Activated B cell treated with CpG ODN at 0.5 μM for 24 hours (primary cell): ENCODE measurements at regions of chr10 and their contacts with region 1.

Region 1: DNA sequence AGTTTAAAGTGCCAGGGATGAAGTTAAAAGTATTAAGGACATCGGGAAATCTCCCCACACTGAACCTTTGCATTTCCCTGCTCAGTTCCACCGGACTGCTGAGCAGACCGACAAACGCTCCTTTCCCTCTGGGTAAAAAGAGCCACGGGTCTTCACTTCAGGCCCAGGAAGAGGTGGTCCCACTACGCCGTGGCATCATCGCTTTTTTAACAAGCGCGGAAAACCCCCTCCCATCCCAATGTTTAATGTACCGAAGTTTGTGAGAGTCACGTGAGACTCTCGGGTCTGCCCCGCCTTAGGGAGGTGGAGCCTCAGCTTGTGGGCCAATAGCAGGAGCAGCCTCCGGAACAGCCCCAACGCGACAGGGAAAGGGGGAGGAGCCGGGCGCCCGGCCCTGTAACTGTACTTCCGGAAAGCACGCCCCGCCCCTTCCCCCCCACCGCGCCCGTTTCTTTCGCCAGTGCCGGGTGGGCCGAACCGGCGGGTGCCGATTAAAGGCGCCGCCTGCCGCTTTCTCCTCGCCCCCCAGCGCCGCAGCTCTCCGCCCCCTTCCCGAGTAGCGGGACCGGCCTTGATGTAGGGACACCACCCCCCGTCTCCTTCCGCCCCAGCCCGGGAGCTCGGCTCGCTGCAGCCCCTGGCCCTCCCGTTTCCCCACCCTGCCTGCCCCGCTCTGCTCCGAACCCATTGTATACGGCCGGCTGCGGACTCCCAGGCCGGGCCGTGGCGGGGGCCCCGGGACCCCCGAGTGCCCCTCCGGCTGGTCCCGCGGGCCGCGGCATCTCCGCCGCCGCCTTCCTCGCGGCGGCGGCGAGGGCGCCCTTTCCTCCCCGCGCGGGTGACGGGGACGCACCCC is 2.2 kb upstream of the TRIM8 start:
- DNase-seq: peak; percentile 88
- ATAC-seq: peak; percentile 65
- H3K4me3 Mint-ChIP-seq: peak overlapping the region; percentile 88
- H3K27ac Mint-ChIP-seq: peak overlapping the region; percentile 96
- H3K4me1 Mint-ChIP-seq: peaks cover 27% of the 10 kb centered on the region
- H3K27me3 Mint-ChIP-seq: no peaks in the 10 kb centered on the region
- CTCF ChIP-seq: no peak

Region 2: DNA sequence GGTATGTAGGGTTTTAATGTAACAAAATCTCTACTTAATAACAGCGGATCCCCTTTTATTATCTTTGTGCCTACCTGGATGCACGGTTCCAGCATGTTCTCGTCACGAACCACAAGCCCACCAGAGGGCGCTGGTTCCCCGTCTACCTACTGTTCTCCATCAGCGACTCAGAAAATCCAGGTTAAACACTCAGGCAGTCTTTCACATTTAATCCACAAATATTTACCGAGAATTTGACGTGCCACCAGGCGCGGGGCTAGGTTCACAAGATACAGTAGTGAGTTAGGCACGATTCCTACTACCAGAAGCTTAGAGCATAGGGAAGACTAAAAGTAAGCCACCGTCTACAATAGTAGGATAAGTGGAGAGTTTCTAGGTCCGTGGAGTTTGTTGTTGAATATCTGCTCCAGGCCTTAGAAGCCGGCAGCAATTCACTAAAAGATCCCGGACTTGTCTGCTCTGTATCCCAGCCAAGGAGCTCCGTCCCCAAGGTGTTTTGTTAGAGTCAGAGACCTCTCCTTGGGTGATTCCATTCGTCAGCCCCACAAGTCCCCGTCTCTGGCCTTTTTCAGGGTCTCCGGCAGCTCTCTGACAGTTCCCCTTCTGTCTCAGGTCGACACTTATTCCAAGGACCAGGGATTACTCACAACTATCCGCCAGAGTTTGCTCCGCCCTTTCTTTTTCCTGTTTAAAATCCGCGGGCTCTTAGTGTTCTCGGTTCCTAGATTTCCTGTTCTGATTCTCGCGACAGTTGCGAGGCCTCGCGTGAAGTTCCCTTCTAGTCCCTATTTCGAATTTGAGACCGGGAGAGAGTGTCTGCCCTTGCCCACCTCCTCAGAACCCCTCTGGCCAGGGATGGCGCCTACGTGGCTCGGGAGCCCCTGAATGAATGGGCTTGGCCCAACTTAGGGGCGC is 1581.8 kb before region 1 on chr10:
- CTCF ChIA-PET with region 1: no interaction called
- POLR2A ChIA-PET with region 1: no interaction called
- intact Hi-C with region 1: loop called (anchors 10 kb)
- DNase-seq: peak; percentile 79
- ATAC-seq: peak; percentile 65
- H3K4me3 Mint-ChIP-seq: peak overlapping the region; percentile 98
- H3K27ac Mint-ChIP-seq: peak overlapping the region; percentile 95
- H3K4me1 Mint-ChIP-seq: peaks cover 34% of the 10 kb centered on the region
- H3K27me3 Mint-ChIP-seq: peaks cover 6% of the 10 kb centered on the region
- CTCF ChIP-seq: peak; percentile 62

Region 3: DNA sequence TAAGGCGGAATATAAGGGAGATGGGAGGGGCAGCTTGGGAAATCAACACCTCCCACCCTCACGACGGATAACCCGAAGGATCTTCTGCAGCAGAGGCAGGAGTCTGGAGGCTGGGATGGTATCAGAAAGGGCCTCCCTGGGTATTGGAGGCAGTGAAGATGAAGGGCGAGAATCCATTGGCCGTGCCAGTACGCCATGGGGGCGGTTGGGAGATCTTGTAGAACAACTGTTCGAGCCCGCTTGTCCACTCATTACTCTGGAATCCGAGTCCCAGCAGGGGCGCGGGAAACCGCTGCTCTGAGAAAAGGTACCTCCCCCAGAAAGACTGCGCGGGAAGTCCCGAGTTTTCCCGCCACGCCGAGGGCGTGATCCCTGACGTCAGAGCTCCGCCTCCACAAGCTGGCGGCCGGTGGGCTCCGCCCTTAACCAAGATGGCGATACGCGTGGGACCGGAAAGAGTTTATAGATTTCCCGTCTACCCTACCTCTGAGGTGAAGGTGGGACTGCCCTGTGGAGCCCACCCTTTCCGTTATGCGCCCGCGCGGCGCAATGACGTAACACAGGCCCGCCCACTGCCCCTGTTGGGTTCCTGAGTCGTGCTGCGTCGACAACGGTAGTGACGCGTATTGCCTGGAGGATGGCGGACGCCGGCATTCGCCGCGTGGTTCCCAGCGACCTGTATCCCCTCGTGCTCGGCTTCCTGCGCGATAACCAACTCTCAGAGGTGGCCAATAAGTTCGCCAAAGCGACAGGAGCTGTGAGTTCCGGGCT is 490.1 kb before region 1 on chr10 and contains the start of gene NOLC1:
- CTCF ChIA-PET with region 1: no interaction called
- POLR2A ChIA-PET with region 1: no interaction called
- intact Hi-C with region 1: loop called (anchors 5 kb)
- DNase-seq: peak; percentile 99
- ATAC-seq: peak; percentile 96
- H3K4me3 Mint-ChIP-seq: peak within 1 kb of the TSS; percentile 97
- H3K27ac Mint-ChIP-seq: peak within 1 kb of the TSS; percentile 93
- H3K4me1 Mint-ChIP-seq: peaks cover 35% of the 10 kb centered on the region
- H3K27me3 Mint-ChIP-seq: no peaks in the 10 kb centered on the region
- CTCF ChIP-seq: no peak
- total RNA-seq, gene NOLC1: 95.1 and 106 TPM in 2 replicates

Region 4: GRCh38 chr10:102596506-102596971 is 45.6 kb before region 1 on chr10:
- CTCF ChIA-PET with region 1: interaction called, 3 read pairs
- POLR2A ChIA-PET with region 1: no interaction called
- intact Hi-C with region 1: loop called (anchors 1 kb)
- DNase-seq: no peak
- ATAC-seq: peak; percentile 61
- H3K4me3 Mint-ChIP-seq: no peak overlapping the region
- H3K27ac Mint-ChIP-seq: no peak overlapping the region
- H3K4me1 Mint-ChIP-seq: no peaks in the 10 kb centered on the region
- H3K27me3 Mint-ChIP-seq: no peaks in the 10 kb centered on the region
- CTCF ChIP-seq: no peak

Region 5: GRCh38 chr10:102621438-102622325 is 20.4 kb before region 1 on chr10:
- CTCF ChIA-PET with region 1: no interaction called
- POLR2A ChIA-PET with region 1: no interaction called
- intact Hi-C with region 1: no loop called
- DNase-seq: no peak
- ATAC-seq: no peak
- H3K4me3 Mint-ChIP-seq: no peak overlapping the region
- H3K27ac Mint-ChIP-seq: no peak overlapping the region
- H3K4me1 Mint-ChIP-seq: peaks cover 11% of the 10 kb centered on the region
- H3K27me3 Mint-ChIP-seq: no peaks in the 10 kb centered on the region
- CTCF ChIP-seq: no peak

Region 6: GRCh38 chr10:102660888-102661657 is 19.0 kb after region 1 on chr10:
- CTCF ChIA-PET with region 1: interaction called, 3 read pairs
- POLR2A ChIA-PET with region 1: interaction called, 11 read pairs
- intact Hi-C with region 1: loop called (anchors 2 kb)
- DNase-seq: no peak
- ATAC-seq: peak; percentile 78
- H3K4me3 Mint-ChIP-seq: no peak overlapping the region
- H3K27ac Mint-ChIP-seq: no peak overlapping the region
- H3K4me1 Mint-ChIP-seq: peaks cover 16% of the 10 kb centered on the region
- H3K27me3 Mint-ChIP-seq: no peaks in the 10 kb centered on the region
- CTCF ChIP-seq: no peak

Region 7: DNA sequence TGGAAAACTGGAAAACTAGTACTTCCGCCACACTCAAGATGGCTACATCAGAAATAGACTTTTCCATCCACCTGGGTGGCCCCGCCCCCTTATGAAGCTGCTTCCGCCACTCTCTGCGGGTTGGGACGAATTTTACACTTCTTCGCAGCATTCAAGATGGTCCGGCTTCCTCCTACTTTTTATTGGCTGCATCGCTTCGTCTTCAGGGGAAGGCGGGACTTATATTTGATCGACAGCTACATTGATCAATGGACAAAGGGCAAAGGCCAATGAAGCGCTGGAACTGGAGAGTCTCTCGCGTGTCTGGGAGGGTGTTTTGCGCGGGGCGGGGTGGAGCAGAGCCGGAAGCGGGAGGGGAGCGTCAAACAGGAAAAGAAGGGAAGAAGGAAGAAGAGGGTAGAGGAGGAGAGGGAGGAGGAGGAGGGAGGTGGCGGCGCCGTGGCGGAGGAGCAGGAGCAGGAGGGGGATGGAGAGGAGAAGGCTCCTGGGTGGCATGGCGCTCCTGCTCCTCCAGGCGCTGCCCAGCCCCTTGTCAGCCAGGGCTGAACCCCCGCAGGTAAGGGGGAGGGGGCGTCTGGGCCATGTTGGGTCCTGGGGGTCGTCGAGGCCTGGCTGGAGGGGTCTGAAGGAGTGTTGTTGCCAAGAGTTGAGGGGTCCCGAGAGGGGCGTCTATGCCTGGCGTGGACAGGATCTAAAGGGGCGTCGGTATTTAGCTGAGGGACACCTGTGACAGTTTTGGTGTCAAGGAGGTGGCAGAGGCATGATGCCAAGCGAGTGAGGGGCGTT is 101.7 kb after region 1 on chr10 and contains the start of gene WBP1L:
- CTCF ChIA-PET with region 1: no interaction called
- POLR2A ChIA-PET with region 1: interaction called, 13 read pairs
- intact Hi-C with region 1: no loop called
- DNase-seq: peak; percentile 81
- ATAC-seq: peak; percentile 98
- H3K4me3 Mint-ChIP-seq: peak within 1 kb of the TSS; percentile 93
- H3K27ac Mint-ChIP-seq: peak within 1 kb of the TSS; percentile 87
- H3K4me1 Mint-ChIP-seq: peaks cover 47% of the 10 kb centered on the region
- H3K27me3 Mint-ChIP-seq: no peaks in the 10 kb centered on the region
- CTCF ChIP-seq: no peak
- total RNA-seq, gene WBP1L: 30.5 and 30.8 TPM in 2 replicates

Region 8: DNA sequence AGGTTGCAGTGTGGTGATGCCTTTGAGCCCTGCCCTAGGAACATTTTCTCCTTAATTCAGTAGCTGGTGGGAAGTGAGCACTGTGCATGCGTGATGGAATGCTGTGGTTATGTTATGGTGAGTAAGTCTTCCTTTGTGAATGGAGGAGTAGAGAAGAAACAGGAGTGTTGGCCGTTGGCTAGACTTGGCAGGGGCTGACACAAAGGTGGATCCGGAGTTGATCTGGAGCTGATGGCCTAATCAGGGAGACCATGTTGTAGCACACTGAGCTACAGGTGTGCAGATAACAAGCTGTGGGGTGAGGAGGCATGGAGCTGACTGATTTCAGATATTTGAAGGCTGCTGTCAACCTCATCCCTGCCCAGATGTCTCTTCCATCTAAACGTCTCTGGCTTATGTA is 398.3 kb after region 1 on chr10:
- CTCF ChIA-PET with region 1: no interaction called
- POLR2A ChIA-PET with region 1: no interaction called
- intact Hi-C with region 1: no loop called
- DNase-seq: no peak
- ATAC-seq: no peak
- H3K4me3 Mint-ChIP-seq: no peak overlapping the region
- H3K27ac Mint-ChIP-seq: no peak overlapping the region
- H3K4me1 Mint-ChIP-seq: peaks cover 15% of the 10 kb centered on the region
- H3K27me3 Mint-ChIP-seq: no peaks in the 10 kb centered on the region
- CTCF ChIP-seq: no peak

Region 9: GRCh38 chr10:103470761-103471653 is 828.9 kb after region 1 on chr10:
- CTCF ChIA-PET with region 1: no interaction called
- POLR2A ChIA-PET with region 1: no interaction called
- intact Hi-C with region 1: loop called (anchors 10 kb)
- DNase-seq: peak; percentile 70
- ATAC-seq: peak; percentile 76
- H3K4me3 Mint-ChIP-seq: peak overlapping the region; percentile 75
- H3K27ac Mint-ChIP-seq: peak overlapping the region; percentile 96
- H3K4me1 Mint-ChIP-seq: peaks cover 72% of the 10 kb centered on the region
- H3K27me3 Mint-ChIP-seq: no peaks in the 10 kb centered on the region
- CTCF ChIP-seq: no peak